GM12878 (cell line): ENCODE measurements at regions of chr2 and their contacts with region 1.

Region 1: GRCh38 chr2:137228566-137228965 is 463.2 kb downstream of the THSD7B start:
- DNase-seq: no peak
- ATAC-seq: no peak
- H3K4me3 ChIP-seq: no peak overlapping the region
- H3K27ac ChIP-seq: no peak overlapping the region
- H3K4me1 ChIP-seq: no peaks in the 10 kb centered on the region
- H3K27me3 ChIP-seq: no peaks in the 10 kb centered on the region
- CTCF ChIP-seq: no peak
- EP300 ChIP-seq: no peak
- POLR2A ChIP-seq: no peak
- RAD21 ChIP-seq: no peak

Region 2: DNA sequence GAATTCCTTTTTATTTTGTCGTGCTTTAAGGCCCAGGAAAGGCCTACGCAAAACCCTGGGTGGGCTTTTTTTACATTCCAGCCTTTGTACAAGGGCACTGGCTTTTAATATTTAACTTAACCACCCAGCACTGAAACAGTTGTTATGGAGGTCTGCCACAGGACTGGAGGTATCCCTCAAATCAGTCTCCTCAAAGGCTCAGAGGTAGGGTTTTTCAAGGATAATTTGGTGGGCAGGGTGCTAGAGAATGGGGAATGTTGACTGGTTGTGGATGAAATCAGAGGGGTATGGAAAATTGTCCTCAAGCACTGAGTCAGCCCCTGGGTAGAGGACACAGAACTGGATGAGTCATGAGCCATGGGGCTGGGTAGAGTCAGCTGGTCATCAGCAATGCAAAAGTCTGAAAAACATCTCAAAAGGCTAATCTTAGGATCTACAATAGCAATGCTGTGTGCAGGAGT is 20.1 kb before region 1 on chr2:
- CTCF ChIA-PET with region 1: interaction called, 5 read pairs
- POLR2A ChIA-PET with region 1: no interaction called
- RAD21 ChIA-PET with region 1: interaction called, 6 read pairs
- SMC1A ChIA-PET with region 1: interaction called, 31 read pairs
- in situ Hi-C with region 1: no loop called
- intact Hi-C with region 1: no loop called
- DNase-seq: no peak
- ATAC-seq: peak; percentile 25
- H3K4me3 ChIP-seq: no peak overlapping the region
- H3K27ac ChIP-seq: no peak overlapping the region
- H3K4me1 ChIP-seq: no peaks in the 10 kb centered on the region
- H3K27me3 ChIP-seq: no peaks in the 10 kb centered on the region
- CTCF ChIP-seq: no peak
- EP300 ChIP-seq: no peak
- POLR2A ChIP-seq: no peak
- RAD21 ChIP-seq: no peak